SK-N-SH (cell line): ENCODE measurements at regions of chr7 and their contacts with region 1.

Region 1: DNA sequence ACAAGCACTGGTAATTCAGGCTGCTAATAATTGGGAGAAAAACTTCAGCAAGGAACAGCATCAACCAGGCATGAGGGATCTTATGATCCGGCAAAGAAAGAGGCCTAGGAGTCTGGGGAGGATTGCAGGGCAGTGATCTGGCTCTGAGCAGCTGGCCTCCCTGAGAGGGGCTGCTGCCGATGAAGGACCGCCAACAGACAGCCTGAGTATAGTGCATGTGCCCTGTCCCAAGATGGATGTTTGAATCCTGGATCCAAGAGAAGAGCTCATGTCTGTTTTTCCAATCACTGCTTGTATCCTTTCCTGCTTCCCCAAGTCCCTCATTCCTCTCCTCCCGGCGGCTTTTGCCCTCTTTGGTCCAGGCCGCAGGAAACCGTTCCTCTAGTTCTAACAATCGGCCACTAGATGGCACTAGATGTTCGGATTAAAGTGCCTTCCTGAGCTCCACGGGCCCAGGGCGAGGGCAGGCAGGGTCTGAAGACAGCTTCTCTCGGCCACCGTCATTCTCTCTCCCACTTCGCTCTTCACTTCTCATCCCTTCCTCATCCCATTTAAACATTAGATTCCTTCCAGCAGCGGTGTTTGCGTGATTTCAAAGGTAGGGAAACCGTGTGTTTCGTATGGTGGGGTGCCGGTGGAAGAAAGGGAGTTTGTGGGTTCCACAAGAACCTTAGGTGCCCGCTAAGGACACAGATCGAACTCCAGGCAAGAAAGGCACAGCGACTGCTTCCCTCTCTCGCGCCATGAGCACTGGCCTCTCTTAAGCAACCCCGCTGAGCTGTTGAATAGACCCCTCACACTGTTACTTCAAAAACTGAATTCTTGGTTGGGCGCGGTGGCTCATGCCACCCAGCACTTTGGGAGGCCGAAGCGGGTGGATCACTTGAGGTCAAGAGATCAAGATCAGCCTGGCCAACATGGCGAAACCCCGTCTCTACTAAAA is 82.4 kb downstream of the ADCYAP1R1 start:
- DNase-seq: peak; percentile 86
- H3K4me3 ChIP-seq: no peak overlapping the region; a peak in 1 of 4 replicates
- H3K27ac ChIP-seq: no peak overlapping the region
- H3K4me1 ChIP-seq: no peaks in the 10 kb centered on the region; a peak in 1 of 4 replicates
- H3K27me3 ChIP-seq: peaks cover 10% of the 10 kb centered on the region; the same call in 1 of the 2 replicates
- CTCF ChIP-seq: peak; percentile 88
- EP300 ChIP-seq: no peak
- RAD21 ChIP-seq: peak; percentile 91

Region 2: GRCh38 chr7:30646154-30646553 is 488.4 kb before region 1 on chr7:
- CTCF ChIA-PET with region 1: no interaction called
- POLR2A ChIA-PET with region 1: no interaction called
- DNase-seq: peak; percentile 14
- H3K4me3 ChIP-seq: no peak overlapping the region
- H3K27ac ChIP-seq: no peak overlapping the region
- H3K4me1 ChIP-seq: no peaks in the 10 kb centered on the region; a peak in 1 of 4 replicates
- H3K27me3 ChIP-seq: no peaks in the 10 kb centered on the region
- CTCF ChIP-seq: no peak
- EP300 ChIP-seq: no peak
- RAD21 ChIP-seq: no peak

Region 3: DNA sequence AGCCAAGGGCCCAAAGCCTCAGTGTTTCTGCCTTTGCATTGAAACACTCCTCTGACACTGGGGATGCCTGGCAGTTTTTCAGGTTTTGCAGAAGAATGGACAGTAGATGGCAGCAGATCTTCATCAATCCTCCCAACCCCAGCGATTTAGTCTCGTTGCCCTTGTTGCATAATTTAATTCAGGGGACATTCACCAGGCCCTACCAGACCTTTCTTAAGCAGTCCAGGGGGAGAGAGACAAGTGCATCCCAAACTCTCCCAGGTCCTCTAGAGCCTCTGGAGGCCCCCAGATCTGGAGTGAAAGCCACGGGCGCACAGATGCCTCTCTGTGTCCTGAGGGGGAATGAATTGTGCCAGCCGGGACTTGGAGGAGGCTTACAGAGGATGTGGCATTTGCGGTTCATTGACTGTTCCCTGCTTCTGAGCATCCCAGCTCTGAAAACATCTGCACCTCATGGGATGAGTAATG is 333.7 kb before region 1 on chr7:
- CTCF ChIA-PET with region 1: interaction called, 10 read pairs
- POLR2A ChIA-PET with region 1: no interaction called
- DNase-seq: peak; percentile 89
- H3K4me3 ChIP-seq: no peak overlapping the region
- H3K27ac ChIP-seq: peak overlapping the region in 1 of 2 experiments; percentile 4; a peak in 2 of 4 replicates
- H3K4me1 ChIP-seq: peaks cover 24 to 51% of the 10 kb centered on the region in 2 experiments
- H3K27me3 ChIP-seq: no peaks in the 10 kb centered on the region
- CTCF ChIP-seq: peak; percentile 96
- EP300 ChIP-seq: no peak
- RAD21 ChIP-seq: peak; percentile 100

Region 4: GRCh38 chr7:30983042-30983913 is 151.2 kb before region 1 on chr7:
- CTCF ChIA-PET with region 1: interaction called, 1,191 read pairs
- POLR2A ChIA-PET with region 1: no interaction called
- DNase-seq: peak; percentile 94
- H3K4me3 ChIP-seq: peak overlapping the region in 1 of 2 experiments; percentile 8; a peak in 1 of 4 replicates
- H3K27ac ChIP-seq: no peak overlapping the region
- H3K4me1 ChIP-seq: peaks cover 0 to 7% of the 10 kb centered on the region in 2 experiments; a peak in 1 of 4 replicates
- H3K27me3 ChIP-seq: peaks cover 20% of the 10 kb centered on the region; the same call in 1 of the 2 replicates
- CTCF ChIP-seq: peak; percentile 97
- EP300 ChIP-seq: no peak
- RAD21 ChIP-seq: peak; percentile 100

Region 5: GRCh38 chr7:31036924-31037323 is 97.6 kb before region 1 on chr7:
- CTCF ChIA-PET with region 1: interaction called, 12 read pairs
- POLR2A ChIA-PET with region 1: no interaction called
- DNase-seq: no peak
- H3K4me3 ChIP-seq: no peak overlapping the region
- H3K27ac ChIP-seq: no peak overlapping the region
- H3K4me1 ChIP-seq: no peaks in the 10 kb centered on the region; a peak in 1 of 4 replicates
- H3K27me3 ChIP-seq: peaks cover 35% of the 10 kb centered on the region
- CTCF ChIP-seq: no peak
- EP300 ChIP-seq: no peak
- RAD21 ChIP-seq: no peak

Region 6: DNA sequence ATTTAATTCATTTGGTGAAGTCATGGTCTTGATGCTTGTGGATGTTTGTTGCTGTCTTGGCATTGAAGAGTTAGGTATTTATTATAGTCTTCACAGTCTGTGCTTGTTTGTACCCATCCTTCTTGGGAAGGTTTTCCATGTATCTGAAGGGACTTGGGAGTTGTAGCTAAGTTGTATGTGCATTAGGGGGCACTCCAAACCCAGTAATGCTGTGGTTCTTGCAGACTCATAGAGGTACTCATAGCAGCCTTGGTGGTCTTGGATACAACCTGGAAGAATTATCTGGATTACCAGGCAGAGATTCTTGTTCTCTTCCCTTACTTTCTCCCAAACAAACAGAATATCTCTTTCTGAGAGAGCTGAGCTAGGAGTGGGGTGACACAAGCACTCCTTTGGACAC is 10.8 kb after region 1 on chr7:
- CTCF ChIA-PET with region 1: interaction called, 50 read pairs
- POLR2A ChIA-PET with region 1: no interaction called
- DNase-seq: no peak
- H3K4me3 ChIP-seq: no peak overlapping the region
- H3K27ac ChIP-seq: no peak overlapping the region
- H3K4me1 ChIP-seq: no peaks in the 10 kb centered on the region
- H3K27me3 ChIP-seq: peaks cover 11% of the 10 kb centered on the region
- CTCF ChIP-seq: no peak
- EP300 ChIP-seq: no peak
- RAD21 ChIP-seq: no peak; the same call in 1 of the 2 replicates

Region 7: DNA sequence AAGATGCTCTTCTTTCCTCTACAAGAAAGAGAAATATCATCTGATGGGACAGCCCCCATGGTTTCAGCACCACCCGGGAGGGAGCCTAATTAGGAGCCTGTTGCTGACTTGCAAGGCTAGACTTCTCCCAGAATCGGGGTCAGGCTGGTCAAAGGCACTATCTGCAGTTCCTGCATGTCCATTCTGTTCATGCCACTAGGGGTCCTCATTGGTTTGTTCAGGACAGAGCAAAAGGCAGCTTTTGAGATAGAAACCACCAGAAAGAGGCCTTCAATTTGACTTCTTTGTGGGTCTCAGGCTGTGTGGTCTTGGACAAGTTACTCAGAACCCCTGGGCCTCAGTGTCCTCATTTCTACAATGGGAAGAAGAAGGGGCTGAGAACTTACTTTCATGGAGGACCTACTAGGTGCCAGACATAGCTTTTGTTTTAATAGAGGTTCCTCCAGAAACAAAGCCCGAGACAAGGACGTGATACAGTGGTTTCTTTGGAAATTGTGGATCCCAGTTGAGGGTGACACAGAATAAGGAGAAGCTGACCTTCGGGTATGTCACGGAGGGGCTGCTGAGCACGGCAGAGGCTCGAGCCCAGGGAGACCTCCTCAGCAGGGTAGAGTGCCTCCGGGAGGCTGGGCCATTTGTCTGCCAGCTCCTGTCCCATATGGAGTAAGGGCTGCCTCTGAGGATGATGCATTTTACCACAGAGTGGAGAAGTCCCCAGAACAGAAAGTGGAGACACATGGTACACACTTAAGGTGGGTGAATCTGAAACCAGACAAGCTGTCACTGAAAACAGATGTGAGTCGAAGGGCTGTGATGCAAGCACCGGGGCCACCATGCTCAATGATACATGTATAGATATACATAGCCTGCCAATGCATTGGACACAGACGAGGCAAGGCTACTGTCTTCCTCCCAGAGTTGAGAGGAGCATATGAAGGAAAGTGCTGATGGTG is 239.1 kb after region 1 on chr7:
- CTCF ChIA-PET with region 1: interaction called, 14 read pairs
- POLR2A ChIA-PET with region 1: no interaction called
- DNase-seq: peak; percentile 52
- H3K4me3 ChIP-seq: peak overlapping the region in 1 of 2 experiments; percentile 7; a peak in 1 of 4 replicates
- H3K27ac ChIP-seq: no peak overlapping the region
- H3K4me1 ChIP-seq: no peaks in the 10 kb centered on the region; a peak in 1 of 4 replicates
- H3K27me3 ChIP-seq: peaks cover 56% of the 10 kb centered on the region
- CTCF ChIP-seq: peak; percentile 77
- EP300 ChIP-seq: no peak
- RAD21 ChIP-seq: peak; percentile 65

Region 8: GRCh38 chr7:31488562-31489203 is 354.2 kb after region 1 on chr7:
- CTCF ChIA-PET with region 1: interaction called, 10 read pairs
- POLR2A ChIA-PET with region 1: no interaction called
- DNase-seq: peak; percentile 65
- H3K4me3 ChIP-seq: peak overlapping the region in 1 of 2 experiments; percentile 14; a peak in 1 of 4 replicates
- H3K27ac ChIP-seq: no peak overlapping the region
- H3K4me1 ChIP-seq: no peaks in the 10 kb centered on the region
- H3K27me3 ChIP-seq: peaks cover 23% of the 10 kb centered on the region; the same call in 1 of the 2 replicates
- CTCF ChIP-seq: peak; percentile 82
- EP300 ChIP-seq: no peak
- RAD21 ChIP-seq: peak; percentile 65